Posterior vena cava (tissue), 2 donors: ENCODE measurements at regions of chr9 and their contacts with region 1.

Region 1: DNA sequence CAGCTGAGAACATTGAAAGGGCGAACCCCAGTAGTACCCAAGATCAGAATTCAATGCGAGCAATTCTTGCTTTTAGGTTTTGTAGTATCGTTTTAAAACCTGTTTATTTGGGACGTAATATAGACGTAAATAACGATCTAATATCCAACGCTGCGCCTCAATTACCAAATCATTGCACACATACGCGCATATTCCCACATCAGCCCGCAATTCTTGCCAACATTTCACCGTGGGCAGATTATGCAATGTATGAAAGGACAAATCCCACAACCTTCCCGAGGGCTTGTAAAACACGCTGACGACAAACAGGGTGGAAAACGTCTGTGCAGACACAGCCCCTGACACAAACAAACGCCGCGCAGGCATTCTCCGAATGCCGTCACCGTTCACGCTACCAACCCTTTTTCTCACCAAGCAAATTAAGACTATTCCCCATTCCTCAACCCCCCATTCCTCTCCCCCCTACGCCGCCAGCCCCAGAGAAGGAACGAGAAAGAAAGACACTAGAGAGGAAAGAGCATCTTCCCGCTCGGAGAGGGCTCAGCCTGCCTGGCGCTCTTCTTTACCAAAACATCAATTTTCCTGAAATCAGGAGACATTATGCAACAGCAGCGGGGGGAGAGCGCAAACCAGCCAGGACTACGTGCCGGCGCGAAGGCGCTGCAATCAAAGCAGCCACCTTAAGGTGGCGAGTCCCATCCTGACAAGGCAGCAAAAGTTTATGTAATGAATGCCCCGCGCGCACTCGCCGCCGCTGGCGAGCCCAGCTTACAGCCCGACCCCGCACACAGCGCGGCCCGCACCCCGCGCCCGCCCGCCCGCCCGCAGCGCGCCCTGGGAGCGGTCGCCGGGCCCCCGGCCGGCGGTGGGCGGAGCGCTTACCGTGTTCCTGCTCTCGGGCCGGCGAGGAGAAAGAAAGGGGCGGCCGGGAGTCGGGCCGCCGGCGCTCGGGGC is 597 bp downstream of the NFIL3 start:
- DNase-seq: peak; percentile 90

Region 2: GRCh38 chr9:90914868-90915483 is 508.1 kb before region 1 on chr9:
- intact Hi-C with region 1: loop called in 1 of 2 experiments (anchors 5 kb)
- DNase-seq: peak; percentile 89

Region 3: DNA sequence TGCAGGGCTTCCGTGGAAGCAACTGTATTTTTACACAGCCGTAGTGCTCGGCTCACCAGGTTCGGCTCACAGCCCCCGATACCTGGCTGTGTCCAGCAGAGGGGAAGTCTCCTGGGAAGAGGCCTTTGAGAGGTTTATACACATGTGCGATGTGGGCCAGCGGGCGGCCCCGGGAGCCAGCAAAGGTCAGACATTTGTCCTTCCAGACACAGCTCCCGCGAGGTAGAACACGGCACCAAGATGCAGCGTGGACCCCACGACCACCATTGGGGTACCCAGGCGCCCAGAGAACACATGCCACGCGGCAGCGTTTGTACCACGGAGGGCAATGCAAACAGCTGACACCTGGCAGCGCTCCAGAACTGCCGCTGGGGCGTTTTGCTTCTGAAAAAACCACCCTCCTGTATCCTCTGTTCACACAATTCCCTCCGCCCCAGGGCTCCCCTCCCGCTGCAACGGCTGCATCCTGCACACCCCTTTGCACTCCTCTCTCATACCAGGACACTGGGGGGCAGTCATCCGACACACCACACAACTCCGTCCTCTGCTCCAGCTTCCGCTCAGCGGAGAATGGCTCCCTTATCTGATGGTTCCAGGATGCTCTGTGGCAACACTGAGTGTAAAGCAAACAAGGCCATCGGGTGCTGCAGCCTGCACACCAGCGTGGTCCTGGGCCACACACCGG is 386.1 kb before region 1 on chr9:
- intact Hi-C with region 1: loop called in 1 of 2 experiments (anchors 2 kb)
- DNase-seq: peak; percentile 92

Region 4: GRCh38 chr9:91089405-91090129 is 333.5 kb before region 1 on chr9:
- intact Hi-C with region 1: loop called in 1 of 2 experiments (anchors 10 kb)
- DNase-seq: no peak

Region 5: GRCh38 chr9:91117959-91118703 is 304.9 kb before region 1 on chr9:
- intact Hi-C with region 1: loop called in 1 of 2 experiments (anchors 10 kb)
- DNase-seq: peak; percentile 95

Region 6: DNA sequence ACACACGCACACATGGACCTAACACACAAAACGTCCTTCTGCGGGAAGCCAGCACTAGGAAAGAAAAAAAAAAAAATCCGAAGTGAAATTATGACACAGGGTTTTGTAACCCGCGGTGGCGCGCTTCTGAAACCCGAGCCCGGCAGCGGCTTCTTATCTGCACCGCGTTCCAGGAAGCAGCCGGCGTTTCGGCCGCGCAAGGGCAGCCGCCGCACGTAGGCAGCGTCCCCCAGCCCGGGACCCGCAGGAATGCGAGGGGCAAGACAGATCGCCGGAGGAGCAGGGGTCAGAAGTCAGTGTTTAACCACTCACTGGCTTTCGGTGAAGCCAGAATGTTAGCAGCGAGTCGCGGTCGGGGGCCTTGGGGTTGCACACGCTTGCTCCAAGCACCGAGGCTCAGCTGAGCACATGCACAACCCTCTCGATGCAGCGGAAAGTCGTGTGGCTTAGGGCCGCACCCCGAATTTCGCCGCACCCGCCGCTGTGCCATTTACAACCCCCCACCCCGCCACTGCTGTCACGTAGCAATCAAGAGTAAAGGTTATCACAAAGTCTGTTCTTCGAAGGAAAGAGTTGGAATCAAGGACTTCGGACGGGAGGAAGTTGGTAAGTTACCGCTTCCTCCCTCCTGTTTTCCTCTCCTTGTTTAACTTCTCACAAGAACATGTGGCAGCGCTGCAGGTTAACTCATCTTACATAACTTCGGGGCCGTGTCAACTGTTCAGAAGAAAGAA is 229.2 kb before region 1 on chr9:
- intact Hi-C with region 1: loop called (anchors 2 to 5 kb)
- DNase-seq: peak; percentile 98

Region 7: GRCh38 chr9:91465420-91465819 is 42.4 kb after region 1 on chr9:
- intact Hi-C with region 1: no loop called
- DNase-seq: no peak

Region 8: DNA sequence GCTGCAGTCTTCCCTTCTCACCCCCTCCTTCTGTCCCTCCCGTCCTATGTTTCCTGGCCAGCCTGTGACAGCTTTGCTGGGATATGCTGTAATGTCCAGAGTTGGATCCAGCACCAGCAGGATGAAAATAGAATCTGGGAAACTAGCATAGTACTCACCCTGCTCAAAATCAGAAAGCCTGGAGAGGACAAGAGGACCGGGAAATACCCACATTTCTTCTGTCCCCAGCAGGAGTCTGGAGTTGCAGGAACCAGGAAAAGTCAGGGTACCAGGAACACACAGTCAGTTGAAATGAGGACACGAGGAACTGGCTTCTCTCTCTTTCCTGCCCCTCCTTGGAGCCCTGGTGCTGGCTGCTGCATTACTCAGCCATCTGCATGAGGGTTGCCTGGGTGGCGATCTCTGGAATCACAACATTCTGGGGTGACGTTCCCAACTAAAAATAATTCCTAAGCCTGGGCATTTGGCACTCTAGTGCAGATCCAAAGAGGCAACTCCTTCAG is 60.2 kb after region 1 on chr9:
- intact Hi-C with region 1: no loop called
- DNase-seq: no peak